CD8-positive, alpha-beta memory T cell (primary cell): ENCODE measurements at regions of chr1 and their contacts with region 1.

Region 1: GRCh38 chr1:145858894-145859490 is at the start of gene PIAS3:
- DNase-seq: peak; percentile 74 to 86 (median 80)
- H3K4me3 ChIP-seq: peak within 1 kb of the TSS; percentile 80
- H3K4me3 Mint-ChIP-seq: peak within 1 kb of the TSS; percentile 93 to 99 (median 97)
- H3K27ac ChIP-seq: peak within 1 kb of the TSS; percentile 56
- H3K27ac Mint-ChIP-seq: peak within 1 kb of the TSS; percentile 77 to 96 (median 90)
- H3K4me1 ChIP-seq: peaks cover 13% of the 10 kb centered on the region
- H3K4me1 Mint-ChIP-seq: peaks cover 11 to 29% (median 29%) of the 10 kb centered on the region in 3 donors
- H3K27me3 ChIP-seq: no peaks in the 10 kb centered on the region
- H3K27me3 Mint-ChIP-seq: peaks cover 0 to 1% of the 10 kb centered on the region in 2 donors
- total RNA-seq, gene PIAS3: 16.7 to 18.3 TPM

Region 2: GRCh38 chr1:145823565-145824498 is 35.2 kb before region 1 on chr1 and contains the starts of genes POLR3C and RNF115:
- CTCF ChIA-PET with region 1: interaction called, 7 read pairs
- POLR2A ChIA-PET with region 1: interaction called, 16 read pairs
- DNase-seq: peak; percentile 79 to 92 (median 84)
- H3K4me3 ChIP-seq: peak within 1 kb of the TSS; percentile 65
- H3K4me3 Mint-ChIP-seq: peak within 1 kb of the TSS; percentile 97 to 100 (median 98)
- H3K27ac ChIP-seq: peak within 1 kb of the TSS; percentile 70
- H3K27ac Mint-ChIP-seq: peak within 1 kb of the TSS; percentile 90 to 98 (median 96)
- H3K4me1 ChIP-seq: peaks cover 21% of the 10 kb centered on the region
- H3K4me1 Mint-ChIP-seq: peaks cover 33 to 47% (median 36%) of the 10 kb centered on the region in 3 donors
- H3K27me3 ChIP-seq: no peaks in the 10 kb centered on the region
- H3K27me3 Mint-ChIP-seq: no peaks in the 10 kb centered on the region
- total RNA-seq, gene POLR3C: 53.1 to 54.1 TPM
- total RNA-seq, gene RNF115: 16.9 to 17.8 TPM

Region 3: DNA sequence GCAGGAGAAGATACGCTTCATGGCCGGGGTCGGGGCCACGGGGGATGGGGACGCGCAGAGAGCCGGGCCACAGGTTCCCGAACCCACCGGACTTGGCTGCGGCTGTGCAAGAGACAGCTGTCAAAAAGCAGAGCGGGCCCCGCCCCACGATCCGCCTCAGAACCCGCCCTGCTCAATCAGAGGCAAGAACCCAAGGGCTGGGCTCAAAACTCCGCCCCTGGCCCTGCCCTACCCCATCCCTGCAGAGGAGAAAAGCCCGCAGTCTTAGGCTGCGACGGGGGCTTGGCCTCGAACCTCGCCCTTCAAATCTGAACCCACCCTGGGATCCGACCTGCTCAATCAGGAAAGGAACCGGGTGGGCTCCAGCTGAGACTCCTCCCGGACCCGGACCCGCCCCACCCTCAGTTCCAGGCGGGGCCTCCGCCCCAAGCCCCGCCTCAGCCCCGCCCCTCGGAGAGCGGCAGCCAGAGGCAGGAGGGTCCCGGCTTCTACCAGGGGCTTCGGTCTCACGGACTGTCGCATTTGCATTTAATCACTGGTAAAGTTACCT is 26.8 kb after region 1 on chr1 and contains the start of gene ANKRD35:
- CTCF ChIA-PET with region 1: interaction called, 5 read pairs
- POLR2A ChIA-PET with region 1: interaction called, 11 read pairs
- DNase-seq: peak; percentile 81 to 89 (median 85)
- H3K4me3 ChIP-seq: peak within 1 kb of the TSS; percentile 74
- H3K4me3 Mint-ChIP-seq: peak within 1 kb of the TSS; percentile 71 to 90 (median 84)
- H3K27ac ChIP-seq: no peak within 1 kb of the TSS
- H3K27ac Mint-ChIP-seq: peak within 1 kb of the TSS in 3 of 8 donors; percentile 1 to 34 (median 17)
- H3K4me1 ChIP-seq: peaks cover 13% of the 10 kb centered on the region
- H3K4me1 Mint-ChIP-seq: peaks cover 16 to 20% (median 18%) of the 10 kb centered on the region in 3 donors
- H3K27me3 ChIP-seq: peaks cover 18% of the 10 kb centered on the region
- H3K27me3 Mint-ChIP-seq: peaks cover 23 to 24% of the 10 kb centered on the region in 2 donors
- total RNA-seq, gene ANKRD35: 0.80 to 1.0 TPM

Region 4: DNA sequence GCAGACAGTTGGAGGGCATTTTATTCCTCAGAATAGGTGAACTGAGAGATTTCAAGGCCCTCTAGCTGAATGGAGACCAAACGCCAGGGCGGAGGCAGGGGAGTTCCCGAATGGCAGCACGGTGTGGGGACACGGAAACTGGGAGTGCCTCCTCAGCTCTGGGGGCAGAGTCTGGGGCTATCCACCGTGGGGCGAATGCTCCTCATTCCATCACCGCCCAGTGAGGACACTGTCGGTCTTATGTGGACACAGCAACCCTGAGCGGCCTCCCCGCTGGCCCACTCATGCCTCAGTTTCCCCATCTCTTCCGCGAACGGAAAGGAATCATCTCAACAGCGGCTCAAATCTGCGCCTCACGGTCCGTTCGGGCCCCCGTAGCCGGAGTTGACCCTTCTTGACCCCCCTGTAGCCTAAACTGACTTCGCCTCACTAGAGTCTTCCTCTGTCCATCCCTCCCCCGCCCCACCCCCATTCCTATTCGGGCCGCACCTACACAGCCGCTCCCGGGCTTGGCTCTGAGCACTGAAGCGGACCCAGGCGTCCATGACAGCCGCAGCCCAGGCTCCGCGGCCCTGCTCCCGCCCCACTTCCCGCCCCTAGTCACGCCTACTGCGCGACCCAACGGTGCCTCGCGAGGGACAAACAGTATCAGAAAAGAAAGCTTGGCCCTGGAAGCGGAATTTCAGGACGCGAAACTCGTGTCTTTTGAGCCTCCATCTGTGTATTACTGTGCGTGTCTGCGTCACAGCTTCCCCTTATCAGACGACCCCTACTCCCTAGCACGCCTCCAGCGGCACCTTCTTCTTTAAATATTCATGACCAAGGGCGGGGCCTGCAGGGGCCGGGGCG is 59.4 kb after region 1 on chr1 and contains the start of gene PEX11B:
- CTCF ChIA-PET with region 1: interaction called, 3 read pairs
- POLR2A ChIA-PET with region 1: interaction called, 12 read pairs
- DNase-seq: peak; percentile 85 to 94 (median 89)
- H3K4me3 ChIP-seq: peak within 1 kb of the TSS; percentile 85
- H3K4me3 Mint-ChIP-seq: peak within 1 kb of the TSS; percentile 90 to 100 (median 97)
- H3K27ac ChIP-seq: peak within 1 kb of the TSS; percentile 68
- H3K27ac Mint-ChIP-seq: peak within 1 kb of the TSS; percentile 83 to 98 (median 96)
- H3K4me1 ChIP-seq: peaks cover 21% of the 10 kb centered on the region
- H3K4me1 Mint-ChIP-seq: peaks cover 52 to 66% (median 60%) of the 10 kb centered on the region in 3 donors
- H3K27me3 ChIP-seq: no peaks in the 10 kb centered on the region
- H3K27me3 Mint-ChIP-seq: no peaks in the 10 kb centered on the region
- total RNA-seq, gene PEX11B: 42.0 to 43.1 TPM

Region 5: DNA sequence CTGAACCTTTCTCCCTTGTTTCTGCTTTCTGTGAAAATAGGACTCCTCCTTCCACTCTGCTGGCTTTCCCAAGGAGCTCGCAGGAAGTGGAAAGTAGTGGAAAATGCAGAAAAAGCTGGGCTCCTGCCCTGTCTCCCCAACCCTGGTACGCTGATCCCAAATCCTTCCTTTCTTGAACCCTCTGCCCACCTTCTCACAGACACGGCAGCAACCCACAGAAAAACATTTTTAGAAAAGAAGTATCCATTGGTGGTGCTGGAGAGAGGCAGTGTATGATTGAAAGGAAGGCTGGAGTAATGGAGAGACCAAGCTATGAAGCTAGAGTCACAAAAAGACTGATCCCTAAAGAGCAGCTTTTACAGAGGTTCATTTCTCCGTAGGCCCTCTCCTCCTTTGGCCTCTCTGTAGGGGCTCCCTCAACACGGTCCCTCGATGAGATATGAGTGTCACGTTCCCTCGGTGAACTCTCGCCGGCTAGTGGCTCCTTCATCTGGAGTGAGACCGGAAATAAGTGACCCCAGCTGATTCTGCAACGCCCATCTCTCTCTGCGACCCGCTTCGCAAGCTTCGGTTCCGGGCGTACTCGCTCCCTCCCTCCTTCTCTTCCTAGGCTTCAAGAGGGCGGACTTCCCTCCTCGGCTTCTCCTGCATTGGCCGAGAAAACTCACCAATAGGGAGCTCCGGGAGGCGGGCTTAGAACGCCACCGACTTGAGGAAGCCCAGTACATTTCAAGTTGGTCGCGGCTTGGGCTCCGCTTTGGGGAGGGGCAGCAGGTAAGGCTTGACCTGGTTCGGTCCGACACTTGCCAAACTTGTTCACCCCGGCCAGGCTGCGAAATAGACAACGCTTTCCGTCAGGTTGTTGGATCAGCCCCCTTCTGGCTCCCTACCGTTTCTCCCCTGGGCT is 105.3 kb after region 1 on chr1 and contains the starts of genes ANKRD34A and POLR3GL:
- CTCF ChIA-PET with region 1: interaction called, 9 read pairs
- POLR2A ChIA-PET with region 1: interaction called, 12 read pairs
- DNase-seq: peak; percentile 84 to 95 (median 90)
- H3K4me3 ChIP-seq: peak within 1 kb of the TSS; percentile 88
- H3K4me3 Mint-ChIP-seq: peak within 1 kb of the TSS; percentile 93 to 98 (median 96)
- H3K27ac ChIP-seq: peak within 1 kb of the TSS; percentile 71
- H3K27ac Mint-ChIP-seq: peak within 1 kb of the TSS; percentile 84 to 99 (median 96)
- H3K4me1 ChIP-seq: peaks cover 46% of the 10 kb centered on the region
- H3K4me1 Mint-ChIP-seq: peaks cover 51 to 72% (median 53%) of the 10 kb centered on the region in 3 donors
- H3K27me3 ChIP-seq: no peaks in the 10 kb centered on the region
- H3K27me3 Mint-ChIP-seq: peaks cover 0 to 3% of the 10 kb centered on the region in 2 donors
- total RNA-seq, gene ANKRD34A: 6.9 to 8.7 TPM
- total RNA-seq, gene POLR3GL: 21.6 to 22.8 TPM